Activated CD8-positive, alpha-beta T cell treated with anti-CD3 and anti-CD28 coated beads for 36 hours (primary cell): ENCODE measurements at regions of chr18 and their contacts with region 1.

Region 1: DNA sequence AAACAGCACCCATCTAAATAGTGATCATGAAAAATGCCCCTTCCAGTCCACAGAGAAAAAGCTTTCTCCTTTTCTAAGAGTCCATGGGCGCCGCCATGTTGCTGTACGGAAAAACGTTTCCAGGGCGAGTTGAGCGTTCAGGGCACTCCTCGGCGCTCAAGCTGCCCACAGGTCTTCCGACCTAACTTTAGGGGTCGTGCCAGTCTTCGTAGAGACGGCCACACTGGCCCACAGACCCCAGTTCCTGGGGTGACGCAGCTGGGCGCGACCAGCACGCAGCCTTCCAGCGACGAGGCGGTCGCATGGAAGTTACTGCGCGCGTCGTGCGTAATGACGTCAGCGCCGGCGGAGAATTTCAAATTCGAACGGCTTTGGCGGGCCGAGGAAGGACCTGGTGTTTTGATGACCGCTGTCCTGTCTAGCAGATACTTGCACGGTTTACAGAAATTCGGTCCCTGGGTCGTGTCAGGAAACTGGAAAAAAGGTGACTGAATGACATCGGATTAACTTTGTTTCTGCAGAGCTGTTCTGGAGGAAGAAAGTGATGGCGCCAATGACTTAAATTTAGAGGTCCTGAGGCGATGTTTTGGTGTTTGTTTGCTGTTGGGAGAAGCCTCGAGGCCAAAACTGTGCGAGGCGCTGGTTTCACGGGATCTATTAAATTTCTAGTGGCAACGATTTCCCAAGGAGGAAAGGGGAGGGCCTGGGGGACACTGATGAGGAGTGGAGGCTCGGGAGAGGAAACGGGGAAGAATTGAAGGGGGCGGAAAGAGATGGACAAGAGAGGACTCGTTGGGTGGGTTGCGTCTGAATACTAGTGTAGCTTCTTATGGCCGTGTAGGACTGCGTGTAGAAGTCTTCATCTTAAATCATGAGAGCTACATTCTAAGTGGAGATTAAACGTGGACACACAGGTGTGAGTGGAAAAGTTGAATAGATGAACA is at the starts of genes METTL4 and NDC80:
- DNase-seq: peak; percentile 90
- ATAC-seq: peak; percentile 90
- H3K4me3 Mint-ChIP-seq: peak within 1 kb of the TSS; percentile 99
- H3K27ac Mint-ChIP-seq: peak within 1 kb of the TSS; percentile 99
- H3K4me1 Mint-ChIP-seq: peaks cover 44% of the 10 kb centered on the region
- H3K27me3 Mint-ChIP-seq: no peaks in the 10 kb centered on the region
- CTCF ChIP-seq: no peak
- total RNA-seq, gene METTL4: 18.9 to 20.5 TPM
- total RNA-seq, gene NDC80: 81.3 to 82.2 TPM

Region 2: GRCh38 chr18:2589345-2590068 is 18.0 kb after region 1 on chr18:
- CTCF ChIA-PET with region 1: interaction called, 4 read pairs
- POLR2A ChIA-PET with region 1: interaction called, 22 read pairs
- intact Hi-C with region 1: no loop called
- DNase-seq: no peak
- ATAC-seq: peak; percentile 81
- H3K4me3 Mint-ChIP-seq: peak overlapping the region; percentile 53
- H3K27ac Mint-ChIP-seq: peak overlapping the region; percentile 94
- H3K4me1 Mint-ChIP-seq: peaks cover 56% of the 10 kb centered on the region
- H3K27me3 Mint-ChIP-seq: no peaks in the 10 kb centered on the region
- CTCF ChIP-seq: no peak

Region 3: DNA sequence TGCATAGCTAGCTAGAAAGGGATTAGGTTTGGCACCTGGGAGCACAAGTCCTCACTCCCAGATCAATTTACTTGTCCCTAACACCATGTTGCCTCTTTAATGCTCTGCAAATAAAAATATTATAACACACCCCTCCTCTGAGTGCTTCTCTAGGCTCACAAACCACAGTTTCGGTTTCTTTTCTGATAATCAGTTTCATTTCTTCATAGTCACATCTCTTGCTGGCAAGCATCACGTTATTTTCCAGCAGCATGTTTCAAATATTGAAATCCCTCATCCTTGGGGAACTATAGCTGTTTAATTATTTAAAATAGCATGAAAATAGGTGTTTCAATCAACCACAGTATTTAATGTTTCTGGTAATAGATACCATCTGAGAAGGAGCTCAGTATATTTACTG is 70.2 kb after region 1 on chr18:
- CTCF ChIA-PET with region 1: interaction called, 3 read pairs
- POLR2A ChIA-PET with region 1: interaction called, 3 read pairs
- intact Hi-C with region 1: loop called (anchors 5 kb)
- DNase-seq: no peak
- ATAC-seq: peak; percentile 71
- H3K4me3 Mint-ChIP-seq: peak overlapping the region; percentile 51
- H3K27ac Mint-ChIP-seq: peak overlapping the region; percentile 75
- H3K4me1 Mint-ChIP-seq: peaks cover 50% of the 10 kb centered on the region
- H3K27me3 Mint-ChIP-seq: no peaks in the 10 kb centered on the region
- CTCF ChIP-seq: no peak

Region 4: DNA sequence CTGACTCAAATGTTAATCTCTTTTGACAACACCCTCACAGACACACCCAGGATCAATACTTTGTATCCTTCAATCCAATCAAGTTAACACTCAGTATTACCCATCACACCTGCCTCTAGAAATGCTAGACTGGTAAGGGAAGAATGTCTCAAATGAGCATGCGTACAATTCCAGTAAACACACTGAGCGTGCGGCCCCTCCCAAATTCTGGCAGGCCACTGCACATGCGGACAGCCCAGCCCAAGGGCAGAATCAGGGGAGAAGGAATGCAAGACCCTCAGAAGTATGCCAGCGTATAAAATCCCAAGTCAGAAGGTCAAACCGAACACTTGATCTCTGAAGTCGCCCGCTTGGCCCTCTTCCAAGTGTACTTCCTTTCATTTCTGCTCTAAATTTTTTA is 267.7 kb after region 1 on chr18:
- CTCF ChIA-PET with region 1: no interaction called
- POLR2A ChIA-PET with region 1: no interaction called
- intact Hi-C with region 1: no loop called
- DNase-seq: no peak
- ATAC-seq: no peak
- H3K4me3 Mint-ChIP-seq: no peak overlapping the region
- H3K27ac Mint-ChIP-seq: no peak overlapping the region
- H3K4me1 Mint-ChIP-seq: no peaks in the 10 kb centered on the region
- H3K27me3 Mint-ChIP-seq: peaks cover 4% of the 10 kb centered on the region
- CTCF ChIP-seq: no peak

Region 5: DNA sequence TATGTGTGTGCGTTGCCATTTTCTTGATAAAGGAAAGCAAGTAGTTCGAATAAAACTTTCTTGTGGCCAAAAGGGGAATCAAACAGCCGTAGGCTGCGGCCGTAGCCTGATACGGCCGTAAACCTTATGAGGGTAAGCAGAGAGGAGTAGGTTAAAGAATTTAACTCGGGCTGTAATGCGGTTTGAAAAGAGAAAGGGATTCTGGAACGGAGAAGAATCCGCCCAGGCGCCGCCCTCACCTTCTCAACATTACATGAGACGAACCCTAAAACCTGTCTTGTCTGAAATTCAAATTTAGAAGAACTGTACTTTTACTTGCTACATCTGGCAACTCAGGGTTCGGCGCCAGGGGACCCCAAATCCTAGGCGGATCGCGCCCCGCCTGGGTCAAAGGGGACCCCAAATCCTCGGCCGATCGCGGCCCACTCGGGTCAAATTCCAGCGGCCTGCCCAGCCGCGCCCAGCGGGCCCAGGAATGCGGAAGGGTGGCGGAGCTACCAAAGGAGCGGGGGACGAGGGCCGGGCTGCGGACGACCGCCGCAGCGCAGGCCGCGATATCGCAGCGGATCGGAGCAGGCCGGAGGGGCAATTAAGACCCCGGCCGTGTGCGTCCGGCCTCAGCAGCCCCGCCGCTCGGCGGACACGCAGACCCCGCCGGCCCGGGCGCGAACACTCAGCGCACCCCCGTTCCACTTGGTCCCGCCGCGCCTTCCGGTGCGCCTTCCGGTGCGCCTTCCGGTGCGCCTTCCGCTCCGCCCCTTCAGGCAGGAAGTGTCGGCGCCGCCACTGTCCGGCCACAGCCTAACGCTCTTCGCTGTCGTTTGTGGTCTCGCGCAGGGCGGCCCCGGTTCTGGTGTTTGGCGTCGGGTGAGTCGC is 690.1 kb after region 1 on chr18 and contains the start of gene MYL12B:
- CTCF ChIA-PET with region 1: no interaction called
- POLR2A ChIA-PET with region 1: no interaction called
- intact Hi-C with region 1: loop called (anchors 5 kb)
- DNase-seq: peak; percentile 85
- ATAC-seq: peak; percentile 81
- H3K4me3 Mint-ChIP-seq: peak within 1 kb of the TSS; percentile 91
- H3K27ac Mint-ChIP-seq: peak within 1 kb of the TSS; percentile 99
- H3K4me1 Mint-ChIP-seq: peaks cover 59% of the 10 kb centered on the region
- H3K27me3 Mint-ChIP-seq: no peaks in the 10 kb centered on the region
- CTCF ChIP-seq: no peak
- total RNA-seq, gene MYL12B: 243 to 264 TPM